ENCODE measurements at regions of chr12 and their contacts with region 1.

Region 1: GRCh38 chr12:14664510-14664909 is 31.9 kb downstream of the GUCY2C start:
- DNase-seq: peak in 7 of 9 donors; percentile 29 to 64 (median 48)
- ATAC-seq: peak; percentile 83
- H3K4me3 ChIP-seq: no peak overlapping the region
- H3K4me3 Mint-ChIP-seq: no peak overlapping the region
- H3K27ac ChIP-seq: no peak overlapping the region
- H3K27ac Mint-ChIP-seq: no peak overlapping the region
- H3K4me1 ChIP-seq: no peaks in the 10 kb centered on the region
- H3K4me1 Mint-ChIP-seq: peaks cover 0 to 9% (median 8%) of the 10 kb centered on the region in 7 donors
- H3K27me3 ChIP-seq: peaks cover 0 to 4% of the 10 kb centered on the region in 2 donors
- H3K27me3 Mint-ChIP-seq: peaks cover 0 to 14% (median 5%) of the 10 kb centered on the region in 5 donors

Region 2: GRCh38 chr12:14185427-14186192 is 478.9 kb before region 1 on chr12:
- CTCF ChIA-PET with region 1: no interaction called
- POLR2A ChIA-PET with region 1: no interaction called
- intact Hi-C with region 1: loop called (anchors 1 to 5 kb)
- DNase-seq: peak in 4 of 9 donors; percentile 9 to 29 (median 18)
- ATAC-seq: peak; percentile 54
- H3K4me3 ChIP-seq: no peak overlapping the region
- H3K4me3 Mint-ChIP-seq: no peak overlapping the region
- H3K27ac ChIP-seq: no peak overlapping the region
- H3K27ac Mint-ChIP-seq: no peak overlapping the region
- H3K4me1 ChIP-seq: no peaks in the 10 kb centered on the region
- H3K4me1 Mint-ChIP-seq: no peaks in the 10 kb centered on the region
- H3K27me3 ChIP-seq: no peaks in the 10 kb centered on the region
- H3K27me3 Mint-ChIP-seq: peaks cover 0 to 16% (median 7%) of the 10 kb centered on the region in 5 donors

Region 3: DNA sequence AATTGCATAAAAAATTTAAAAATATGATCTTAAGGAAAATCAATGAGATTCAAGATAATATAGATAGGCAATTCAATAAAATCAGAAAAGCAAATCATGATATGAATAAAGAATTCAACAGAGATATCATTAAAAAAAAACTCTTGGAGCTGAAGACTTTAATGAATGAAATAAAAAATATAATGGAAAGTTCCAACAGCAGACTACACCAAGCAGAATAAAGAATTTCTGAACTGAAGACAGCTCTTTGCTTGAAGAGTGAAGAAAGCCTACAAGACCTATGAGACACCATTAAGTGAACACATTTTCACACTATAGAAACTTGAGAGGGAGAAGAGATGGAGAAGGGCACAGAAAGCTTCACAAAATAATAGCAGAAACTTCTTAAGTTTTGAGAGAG is 142.7 kb before region 1 on chr12:
- CTCF ChIA-PET with region 1: no interaction called
- POLR2A ChIA-PET with region 1: no interaction called
- intact Hi-C with region 1: no loop called
- DNase-seq: no peak
- ATAC-seq: no peak
- H3K4me3 ChIP-seq: no peak overlapping the region
- H3K4me3 Mint-ChIP-seq: no peak overlapping the region
- H3K27ac ChIP-seq: no peak overlapping the region
- H3K27ac Mint-ChIP-seq: no peak overlapping the region
- H3K4me1 ChIP-seq: no peaks in the 10 kb centered on the region
- H3K4me1 Mint-ChIP-seq: no peaks in the 10 kb centered on the region
- H3K27me3 ChIP-seq: no peaks in the 10 kb centered on the region
- H3K27me3 Mint-ChIP-seq: peaks cover 0 to 17% (median 6%) of the 10 kb centered on the region in 5 donors

Region 4: DNA sequence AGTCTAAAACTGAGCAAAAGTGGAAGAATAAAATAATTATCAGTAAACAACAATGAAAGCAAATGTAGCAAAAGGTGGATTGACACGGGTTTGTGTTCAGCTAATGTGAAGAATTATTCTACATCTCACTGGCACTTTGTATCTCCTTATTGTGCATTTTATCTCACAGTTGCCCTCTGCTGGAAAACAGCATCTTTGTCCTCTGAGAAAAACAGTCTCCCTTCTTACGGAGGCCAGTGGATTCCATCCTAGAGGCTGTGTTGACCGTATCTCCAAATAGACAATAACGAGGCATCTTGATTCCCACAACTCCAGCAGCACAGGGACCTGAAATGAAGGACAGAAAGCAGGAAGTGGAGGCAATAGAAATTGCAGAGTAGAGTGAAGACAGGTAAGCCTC is 45.5 kb before region 1 on chr12:
- CTCF ChIA-PET with region 1: interaction called, 4 read pairs
- POLR2A ChIA-PET with region 1: no interaction called
- intact Hi-C with region 1: loop called in 1 of 2 experiments (anchors 10 kb)
- DNase-seq: peak in 3 of 9 donors; percentile 3 to 19 (median 10)
- ATAC-seq: no peak
- H3K4me3 ChIP-seq: no peak overlapping the region
- H3K4me3 Mint-ChIP-seq: peak overlapping the region in 1 of 10 donors; percentile 19
- H3K27ac ChIP-seq: no peak overlapping the region
- H3K27ac Mint-ChIP-seq: no peak overlapping the region
- H3K4me1 ChIP-seq: no peaks in the 10 kb centered on the region
- H3K4me1 Mint-ChIP-seq: peaks cover 0 to 4% (median 0%) of the 10 kb centered on the region in 7 donors
- H3K27me3 ChIP-seq: no peaks in the 10 kb centered on the region
- H3K27me3 Mint-ChIP-seq: peaks cover 2 to 22% (median 21%) of the 10 kb centered on the region in 5 donors

Region 5: DNA sequence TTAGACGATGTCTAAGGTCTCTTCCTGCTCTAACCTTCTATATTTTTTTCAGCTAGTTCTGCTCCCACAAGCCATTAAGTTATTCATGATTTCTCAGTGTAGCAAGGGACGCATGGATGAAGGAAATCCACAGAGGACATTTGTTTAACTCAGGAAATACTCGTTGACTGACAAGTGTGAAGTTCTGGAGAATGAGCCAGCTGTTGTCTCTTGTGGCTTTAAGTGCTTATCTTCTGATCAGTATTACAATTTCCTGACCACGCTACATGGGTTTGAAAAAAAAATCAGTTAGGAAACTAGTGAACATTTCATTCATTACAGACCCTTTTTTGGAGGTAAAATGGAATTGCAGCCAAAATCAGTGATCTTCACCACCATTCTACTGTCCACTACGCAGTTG is 21.3 kb before region 1 on chr12:
- CTCF ChIA-PET with region 1: interaction called, 3 read pairs
- POLR2A ChIA-PET with region 1: no interaction called
- intact Hi-C with region 1: loop called in 1 of 2 experiments (anchors 2 kb)
- DNase-seq: peak in 6 of 9 donors; percentile 29 to 52 (median 42)
- ATAC-seq: peak; percentile 46
- H3K4me3 ChIP-seq: no peak overlapping the region
- H3K4me3 Mint-ChIP-seq: peak overlapping the region; percentile 35 to 79 (median 71)
- H3K27ac ChIP-seq: no peak overlapping the region
- H3K27ac Mint-ChIP-seq: peak overlapping the region; percentile 8 to 83 (median 54)
- H3K4me1 ChIP-seq: peaks cover 14 to 21% of the 10 kb centered on the region in 2 donors
- H3K4me1 Mint-ChIP-seq: peaks cover 15 to 26% (median 24%) of the 10 kb centered on the region in 7 donors
- H3K27me3 ChIP-seq: no peaks in the 10 kb centered on the region
- H3K27me3 Mint-ChIP-seq: peaks cover 0 to 9% (median 0%) of the 10 kb centered on the region in 5 donors

Region 6: GRCh38 chr12:14716848-14717444 is 52.4 kb after region 1 on chr12:
- CTCF ChIA-PET with region 1: interaction called, 3 read pairs
- POLR2A ChIA-PET with region 1: no interaction called
- intact Hi-C with region 1: loop called in 1 of 2 experiments (anchors 1 kb)
- DNase-seq: peak; percentile 13 to 57 (median 45)
- ATAC-seq: peak; percentile 76
- H3K4me3 ChIP-seq: no peak overlapping the region
- H3K4me3 Mint-ChIP-seq: no peak overlapping the region
- H3K27ac ChIP-seq: no peak overlapping the region
- H3K27ac Mint-ChIP-seq: no peak overlapping the region
- H3K4me1 ChIP-seq: no peaks in the 10 kb centered on the region
- H3K4me1 Mint-ChIP-seq: peaks cover 0 to 6% (median 0%) of the 10 kb centered on the region in 7 donors
- H3K27me3 ChIP-seq: no peaks in the 10 kb centered on the region
- H3K27me3 Mint-ChIP-seq: peaks cover 0 to 23% (median 0%) of the 10 kb centered on the region in 5 donors

Region 7: DNA sequence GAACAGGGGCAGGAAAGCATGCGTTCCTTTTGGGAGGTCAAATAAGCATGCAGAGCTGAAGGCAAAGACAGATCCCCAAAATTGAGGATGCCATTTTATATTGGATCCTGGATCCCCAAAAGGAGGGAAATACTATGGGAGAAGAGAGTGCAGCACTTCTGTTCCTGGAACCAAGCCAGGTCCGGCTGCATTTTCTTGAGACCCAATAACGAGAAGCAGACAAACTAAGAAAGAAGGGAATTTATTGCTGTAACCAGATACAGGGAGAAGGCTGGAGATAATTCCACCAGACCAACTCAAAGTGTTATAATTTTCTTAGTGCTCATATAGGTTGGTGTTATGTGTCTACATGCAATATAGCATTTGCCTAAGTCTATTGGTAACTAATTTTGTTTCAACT is 369.1 kb after region 1 on chr12:
- CTCF ChIA-PET with region 1: no interaction called
- POLR2A ChIA-PET with region 1: no interaction called
- intact Hi-C with region 1: no loop called
- DNase-seq: no peak
- ATAC-seq: no peak
- H3K4me3 ChIP-seq: no peak overlapping the region
- H3K4me3 Mint-ChIP-seq: no peak overlapping the region
- H3K27ac ChIP-seq: no peak overlapping the region
- H3K27ac Mint-ChIP-seq: no peak overlapping the region
- H3K4me1 ChIP-seq: no peaks in the 10 kb centered on the region
- H3K4me1 Mint-ChIP-seq: no peaks in the 10 kb centered on the region
- H3K27me3 ChIP-seq: peaks cover 0 to 2% of the 10 kb centered on the region in 2 donors
- H3K27me3 Mint-ChIP-seq: peaks cover 16 to 36% (median 26%) of the 10 kb centered on the region in 5 donors

Region 8: DNA sequence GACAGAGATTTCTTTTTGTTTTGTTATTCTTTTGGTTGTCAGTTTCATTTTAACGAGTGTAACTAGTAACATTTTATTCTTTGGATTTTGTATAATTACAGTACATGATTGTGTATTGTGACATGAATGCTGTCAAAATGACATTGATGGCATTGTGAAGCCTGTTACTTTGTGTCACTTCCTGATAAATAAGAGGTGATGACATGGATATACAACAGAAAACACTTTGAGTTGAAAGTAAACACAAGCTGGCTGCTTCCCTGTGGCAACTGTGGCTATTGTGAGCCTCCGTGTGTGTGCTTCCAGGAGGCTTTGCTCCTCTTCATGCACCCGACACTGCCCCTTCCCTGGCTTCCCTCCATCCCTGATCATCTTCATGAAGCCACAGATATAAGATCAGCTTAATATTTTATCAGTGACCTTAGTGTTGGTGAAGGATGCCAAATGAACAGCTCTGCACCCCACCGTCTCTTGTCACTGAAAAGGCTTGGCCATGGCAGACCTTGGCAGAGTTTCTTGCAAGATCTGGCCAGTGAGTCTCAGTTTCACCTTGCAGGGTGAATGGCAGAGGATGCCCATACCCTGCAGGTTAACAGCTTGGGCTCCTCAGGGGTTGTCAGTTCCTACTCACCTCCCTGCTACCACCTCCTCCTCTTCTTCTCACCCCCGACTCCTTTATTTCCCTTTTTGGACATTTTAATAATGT is 932.8 kb after region 1 on chr12:
- CTCF ChIA-PET with region 1: no interaction called
- POLR2A ChIA-PET with region 1: no interaction called
- intact Hi-C with region 1: no loop called
- DNase-seq: no peak
- ATAC-seq: no peak
- H3K4me3 ChIP-seq: no peak overlapping the region
- H3K4me3 Mint-ChIP-seq: no peak overlapping the region
- H3K27ac ChIP-seq: no peak overlapping the region
- H3K27ac Mint-ChIP-seq: no peak overlapping the region
- H3K4me1 ChIP-seq: no peaks in the 10 kb centered on the region
- H3K4me1 Mint-ChIP-seq: no peaks in the 10 kb centered on the region
- H3K27me3 ChIP-seq: no peaks in the 10 kb centered on the region
- H3K27me3 Mint-ChIP-seq: peaks cover 0 to 5% (median 0%) of the 10 kb centered on the region in 5 donors